Caco-2 (cell line): ENCODE measurements at regions of chrX and their contacts with region 1.

Region 1: DNA sequence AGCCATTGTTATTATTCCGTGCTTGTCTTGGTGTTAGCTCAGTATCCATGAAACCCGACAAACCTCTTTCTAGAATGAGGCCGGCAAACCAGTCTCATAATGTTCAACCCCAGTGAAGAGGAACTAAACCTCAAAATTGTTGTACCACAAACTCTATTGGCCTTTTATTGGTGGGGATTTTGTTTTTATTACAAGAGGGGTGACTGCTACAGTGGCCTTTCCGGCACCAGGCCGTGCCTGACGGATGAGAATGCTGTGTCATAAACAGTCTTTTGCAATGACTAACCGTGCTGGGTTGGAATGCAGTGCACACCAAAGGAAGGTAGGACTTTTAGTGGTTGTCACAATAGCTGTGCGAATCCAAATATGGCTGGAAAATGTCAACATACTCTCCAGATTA is 60.8 kb downstream of the SHROOM2 start:
- DNase-seq: peak; percentile 65 to 77
- H3K4me3 ChIP-seq: no peak overlapping the region
- H3K4me3 Mint-ChIP-seq: peak overlapping the region; percentile 52
- H3K27ac Mint-ChIP-seq: peak overlapping the region; percentile 89
- H3K4me1 ChIP-seq: peaks cover 49% of the 10 kb centered on the region
- H3K4me1 Mint-ChIP-seq: peaks cover 15% of the 10 kb centered on the region
- H3K27me3 ChIP-seq: no peaks in the 10 kb centered on the region
- H3K27me3 Mint-ChIP-seq: no peaks in the 10 kb centered on the region
- CTCF ChIP-seq: no peak

Region 2: DNA sequence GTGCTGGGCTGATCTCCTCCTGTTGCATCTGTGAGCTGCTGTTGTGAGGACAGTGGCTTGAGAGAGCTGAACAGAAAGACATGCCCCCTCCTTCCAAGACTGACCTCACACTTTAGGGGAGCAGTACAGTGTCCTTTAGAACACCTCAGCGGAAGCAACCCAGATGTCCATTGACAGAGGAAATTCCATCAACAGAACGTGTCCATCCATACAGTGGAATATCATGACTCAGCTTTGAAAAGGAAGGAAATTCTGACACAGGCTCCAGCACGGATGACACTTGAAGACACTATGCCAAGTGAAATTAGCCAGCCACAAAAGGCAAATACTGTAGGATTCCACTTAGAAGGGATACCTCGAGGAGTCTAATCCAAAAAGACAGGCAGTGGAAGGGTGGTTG is 184.9 kb before region 1 on chrX:
- CTCF ChIA-PET with region 1: no interaction called
- POLR2A ChIA-PET with region 1: no interaction called
- intact Hi-C with region 1: no loop called
- DNase-seq: no peak
- H3K4me3 ChIP-seq: no peak overlapping the region
- H3K4me3 Mint-ChIP-seq: no peak overlapping the region
- H3K27ac Mint-ChIP-seq: no peak overlapping the region
- H3K4me1 ChIP-seq: no peaks in the 10 kb centered on the region
- H3K4me1 Mint-ChIP-seq: peaks cover 5% of the 10 kb centered on the region
- H3K27me3 ChIP-seq: no peaks in the 10 kb centered on the region
- H3K27me3 Mint-ChIP-seq: no peaks in the 10 kb centered on the region
- CTCF ChIP-seq: no peak

Region 3: GRCh38 chrX:9788911-9789310 is 58.2 kb before region 1 on chrX:
- CTCF ChIA-PET with region 1: interaction called, 3 read pairs
- POLR2A ChIA-PET with region 1: interaction called, 4 read pairs
- intact Hi-C with region 1: loop called (anchors 1 kb)
- DNase-seq: peak; percentile 53 to 62
- H3K4me3 ChIP-seq: no peak overlapping the region
- H3K4me3 Mint-ChIP-seq: peak overlapping the region; percentile 81
- H3K27ac Mint-ChIP-seq: no peak overlapping the region
- H3K4me1 ChIP-seq: peaks cover 14% of the 10 kb centered on the region
- H3K4me1 Mint-ChIP-seq: peaks cover 9% of the 10 kb centered on the region
- H3K27me3 ChIP-seq: no peaks in the 10 kb centered on the region
- H3K27me3 Mint-ChIP-seq: no peaks in the 10 kb centered on the region
- CTCF ChIP-seq: no peak

Region 4: DNA sequence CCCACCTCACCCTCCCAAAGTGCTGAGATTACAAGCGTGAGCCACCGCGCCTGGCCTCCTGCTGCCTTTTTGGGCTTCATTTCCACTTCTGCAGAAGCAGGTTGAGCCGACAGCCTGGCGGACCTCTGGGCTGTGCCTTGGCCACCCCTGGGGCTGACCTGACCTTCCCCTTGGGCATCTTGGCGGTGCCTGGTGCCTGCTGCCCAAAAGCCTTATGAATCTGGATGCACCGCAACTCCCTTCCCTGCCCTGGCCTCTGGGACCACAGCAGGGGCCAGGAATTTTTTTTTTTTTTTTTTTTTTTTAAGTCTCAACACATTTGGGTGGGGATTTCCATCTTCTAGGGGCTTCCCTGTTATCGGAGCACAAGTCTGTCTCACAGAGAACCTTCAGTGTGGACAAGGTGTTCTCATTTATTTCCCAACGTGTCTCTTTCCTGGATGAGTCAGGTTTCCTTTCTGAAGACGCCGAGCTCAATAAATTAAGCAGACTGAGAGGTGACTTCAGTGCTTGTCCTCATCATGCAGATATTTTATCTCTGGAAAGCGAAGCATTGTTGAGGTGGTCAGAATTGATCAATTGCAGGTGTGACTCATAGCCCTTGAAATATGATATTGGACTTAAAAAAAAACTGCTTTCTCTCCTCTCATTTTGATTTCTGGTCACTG is 18.9 kb after region 1 on chrX:
- CTCF ChIA-PET with region 1: no interaction called
- POLR2A ChIA-PET with region 1: no interaction called
- intact Hi-C with region 1: loop called (anchors 2 kb)
- DNase-seq: no peak
- H3K4me3 ChIP-seq: no peak overlapping the region
- H3K4me3 Mint-ChIP-seq: no peak overlapping the region
- H3K27ac Mint-ChIP-seq: peak overlapping the region; percentile 91
- H3K4me1 ChIP-seq: peaks cover 37% of the 10 kb centered on the region
- H3K4me1 Mint-ChIP-seq: peaks cover 24% of the 10 kb centered on the region
- H3K27me3 ChIP-seq: no peaks in the 10 kb centered on the region
- H3K27me3 Mint-ChIP-seq: no peaks in the 10 kb centered on the region
- CTCF ChIP-seq: no peak